ENCODE measurements at regions of chr21 and their contacts with region 1.

Region 1: GRCh38 chr21:40049394-40050290 is 182.4 kb downstream of the PCP4 start:
- DNase-seq: peak; percentile 60 to 89
- ATAC-seq: no peak
- H3K4me3 ChIP-seq: no peak overlapping the region
- H3K27ac ChIP-seq: peak overlapping the region; percentile 18 to 52
- H3K4me1 ChIP-seq: peaks cover 3 to 10% of the 10 kb centered on the region in 2 donors
- H3K27me3 ChIP-seq: no peaks in the 10 kb centered on the region

Region 2: DNA sequence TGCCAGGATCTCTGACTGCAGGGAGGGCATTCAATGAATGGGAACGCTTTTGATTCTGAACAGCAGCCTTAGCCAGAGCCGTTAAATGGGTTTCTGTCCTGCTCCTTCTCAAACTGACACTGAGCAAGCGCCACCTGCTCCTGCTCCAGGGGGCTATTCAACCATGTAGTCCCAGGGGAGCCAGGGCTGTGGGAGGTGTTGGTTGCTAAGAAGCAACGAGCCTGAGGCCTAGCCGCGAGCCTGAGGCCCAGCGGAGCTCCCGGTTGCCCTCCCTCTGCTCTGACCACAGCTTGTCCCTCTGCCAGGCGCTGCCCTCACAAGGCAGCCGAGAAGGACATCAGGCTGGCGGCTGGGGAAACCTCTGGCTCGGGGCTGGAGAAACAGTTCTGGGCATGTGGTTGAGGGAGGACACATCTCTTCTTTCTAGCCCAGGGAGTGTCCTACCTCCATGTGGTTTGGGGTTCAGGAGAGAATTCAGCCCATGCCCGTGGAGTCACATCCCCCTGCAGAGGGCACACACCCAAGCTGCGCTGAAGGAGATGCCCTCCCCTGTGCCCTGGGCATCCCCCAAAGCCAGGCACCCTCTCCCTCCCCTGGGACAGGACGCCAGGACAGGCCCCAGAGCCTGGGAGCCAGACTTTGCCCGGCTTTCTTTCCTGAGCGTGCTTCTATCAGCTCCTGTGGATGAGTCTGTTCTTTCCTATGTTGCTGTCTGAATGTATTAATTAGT is 164.4 kb before region 1 on chr21:
- intact Hi-C with region 1: loop called in 1 of 2 experiments (anchors 5 kb)
- DNase-seq: peak in 1 of 2 donors; percentile 63
- ATAC-seq: no peak
- H3K4me3 ChIP-seq: no peak overlapping the region
- H3K27ac ChIP-seq: no peak overlapping the region
- H3K4me1 ChIP-seq: no peaks in the 10 kb centered on the region
- H3K27me3 ChIP-seq: no peaks in the 10 kb centered on the region

Measured in aorta (tissue), 5 donors.